Uterus (tissue), 4 donors: ENCODE measurements at regions of chr19 and their contacts with region 1.

Region 1: DNA sequence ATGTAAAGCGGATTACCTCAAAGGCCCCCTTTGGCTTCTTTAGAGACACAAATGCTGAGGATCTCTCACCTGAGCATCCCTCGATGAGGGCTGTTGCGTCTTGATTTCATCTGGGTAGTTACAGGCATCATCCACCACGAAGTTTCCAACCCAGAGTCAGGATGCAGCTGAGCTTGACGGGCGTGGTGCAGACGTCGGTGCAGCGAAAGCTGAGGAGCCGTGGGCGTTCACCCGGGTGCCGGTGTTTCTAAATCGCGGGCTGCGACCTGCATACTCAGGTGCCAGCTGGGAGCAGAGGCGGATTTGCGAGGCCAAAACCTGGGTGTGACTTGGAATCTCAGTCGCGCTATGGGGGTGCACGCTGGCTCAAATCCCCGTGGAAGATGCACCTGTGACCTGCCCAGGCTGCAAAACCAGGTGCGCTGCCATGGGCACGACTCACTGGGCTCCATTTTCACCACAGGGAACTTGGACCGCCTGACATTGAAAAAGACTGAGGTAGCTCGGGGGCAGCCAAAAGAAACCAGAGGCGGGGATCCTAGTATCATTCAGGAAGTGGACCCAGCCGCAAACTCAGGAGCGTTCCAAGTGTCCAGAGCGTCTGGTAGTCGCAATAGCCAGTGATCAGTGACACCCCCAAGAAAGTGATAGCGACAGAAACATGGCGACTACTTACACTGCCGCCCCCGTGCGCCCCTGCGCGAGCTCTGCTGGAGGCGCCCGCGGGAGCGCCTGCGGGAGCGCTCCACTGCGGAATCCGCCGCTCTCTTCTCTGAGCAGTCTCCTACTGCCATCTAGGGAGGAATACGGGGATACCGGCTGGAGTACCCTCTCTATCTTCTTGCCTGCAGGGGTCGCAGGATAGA is 36.4 kb upstream of the IGFL4 start:
- DNase-seq: peak; percentile 42 to 58
- H3K4me3 ChIP-seq: no peak overlapping the region
- H3K27ac ChIP-seq: no peak overlapping the region
- H3K4me1 ChIP-seq: no peaks in the 10 kb centered on the region
- H3K27me3 ChIP-seq: peaks cover 0 to 29% of the 10 kb centered on the region in 2 donors
- CTCF ChIP-seq: peak; percentile 50 to 67 (median 60)
- POLR2A ChIP-seq: no peak

Region 2: GRCh38 chr19:46192992-46193650 is 115.9 kb after region 1 on chr19:
- intact Hi-C with region 1: loop called (anchors 10 kb)
- DNase-seq: no peak
- H3K4me3 ChIP-seq: no peak overlapping the region
- H3K27ac ChIP-seq: no peak overlapping the region
- H3K4me1 ChIP-seq: no peaks in the 10 kb centered on the region
- H3K27me3 ChIP-seq: no peaks in the 10 kb centered on the region
- CTCF ChIP-seq: no peak
- POLR2A ChIP-seq: no peak